Right cardiac atrium (tissue), 5 donors: ENCODE measurements at regions of chr9 and their contacts with region 1.

Region 1: GRCh38 chr9:113989017-113989713 is 88.9 kb downstream of the AMBP start:
- DNase-seq: peak; percentile 87 to 89 (median 89)
- ATAC-seq: peak; percentile 77 to 78
- H3K4me3 ChIP-seq: no peak overlapping the region
- H3K27ac ChIP-seq: no peak overlapping the region
- H3K4me1 ChIP-seq: peaks cover 19% of the 10 kb centered on the region
- H3K27me3 ChIP-seq: no peaks in the 10 kb centered on the region

Region 2: DNA sequence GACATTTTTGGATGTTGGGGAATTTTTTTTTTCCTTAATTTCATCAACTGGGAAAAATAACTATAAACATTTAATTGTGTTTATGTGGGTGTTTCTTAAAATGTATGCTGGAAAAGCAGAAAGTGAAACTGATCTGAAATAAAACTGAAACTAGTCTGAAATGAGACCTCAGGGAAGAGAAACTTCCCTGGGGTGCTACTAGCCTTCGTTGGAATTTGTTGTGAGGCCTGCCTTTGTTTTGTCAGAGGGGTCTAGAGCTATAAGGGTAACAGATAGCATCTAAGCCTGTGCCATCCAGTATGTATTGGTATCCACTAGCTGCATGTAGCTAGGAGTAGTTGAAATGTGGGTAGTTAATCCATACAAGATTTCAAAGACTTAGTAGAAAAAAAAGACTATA is 102.7 kb before region 1 on chr9:
- intact Hi-C with region 1: loop called in 1 of 4 experiments (anchors 10 kb)
- DNase-seq: no peak
- ATAC-seq: peak in 1 of 2 donors; percentile 39
- H3K4me3 ChIP-seq: peak overlapping the region; percentile 31
- H3K27ac ChIP-seq: no peak overlapping the region
- H3K4me1 ChIP-seq: peaks cover 14% of the 10 kb centered on the region
- H3K27me3 ChIP-seq: no peaks in the 10 kb centered on the region